ENCODE measurements at regions of chr7 and their contacts with region 1.

Region 1: DNA sequence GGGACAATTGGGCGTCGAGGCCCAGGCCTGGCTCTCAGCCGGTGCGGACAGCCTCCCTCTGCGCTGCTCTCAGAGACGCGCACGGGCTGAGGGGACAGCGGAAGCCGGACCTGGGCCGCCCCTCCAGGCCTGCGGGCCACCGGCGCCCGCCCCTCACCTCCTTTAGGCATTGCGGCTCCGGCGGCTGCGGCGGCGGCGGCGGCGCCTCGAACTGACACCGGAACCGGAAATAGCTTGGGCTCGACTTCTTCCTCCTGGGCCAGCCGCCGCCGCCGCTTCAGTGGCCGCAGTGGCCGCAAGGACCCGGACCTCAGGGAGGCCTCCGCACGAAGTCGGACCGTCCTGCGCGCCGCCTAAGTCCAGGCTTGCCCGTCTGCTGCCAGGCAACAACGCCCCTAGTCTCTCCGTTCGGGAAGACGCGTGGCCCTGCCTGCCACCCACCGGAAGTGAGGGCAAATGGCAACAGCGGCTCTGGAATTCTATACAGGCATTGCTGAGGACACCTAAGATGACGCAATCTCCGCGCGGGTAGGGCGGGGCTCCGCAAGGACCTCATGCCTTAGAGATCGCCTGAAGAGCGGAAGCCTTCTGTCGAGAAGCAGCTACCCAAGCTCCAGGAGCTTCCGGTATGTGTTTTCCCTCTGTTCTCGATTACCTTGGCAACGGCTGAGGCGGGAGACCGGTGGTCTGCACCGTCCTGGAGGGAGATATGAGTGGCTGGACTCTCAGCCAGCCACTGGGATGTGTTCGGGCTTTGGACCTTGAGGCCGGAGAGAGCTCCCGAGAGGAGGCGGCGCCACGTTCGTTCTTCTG is at the starts of genes BUD31 and PDAP1:
- DNase-seq: peak; percentile 95
- CTCF ChIP-seq: no peak

Region 2: GRCh38 chr7:98681951-98682350 is 726.6 kb before region 1 on chr7:
- CTCF ChIA-PET with region 1: no interaction called
- POLR2A ChIA-PET with region 1: no interaction called
- DNase-seq: no peak
- CTCF ChIP-seq: no peak

Region 3: DNA sequence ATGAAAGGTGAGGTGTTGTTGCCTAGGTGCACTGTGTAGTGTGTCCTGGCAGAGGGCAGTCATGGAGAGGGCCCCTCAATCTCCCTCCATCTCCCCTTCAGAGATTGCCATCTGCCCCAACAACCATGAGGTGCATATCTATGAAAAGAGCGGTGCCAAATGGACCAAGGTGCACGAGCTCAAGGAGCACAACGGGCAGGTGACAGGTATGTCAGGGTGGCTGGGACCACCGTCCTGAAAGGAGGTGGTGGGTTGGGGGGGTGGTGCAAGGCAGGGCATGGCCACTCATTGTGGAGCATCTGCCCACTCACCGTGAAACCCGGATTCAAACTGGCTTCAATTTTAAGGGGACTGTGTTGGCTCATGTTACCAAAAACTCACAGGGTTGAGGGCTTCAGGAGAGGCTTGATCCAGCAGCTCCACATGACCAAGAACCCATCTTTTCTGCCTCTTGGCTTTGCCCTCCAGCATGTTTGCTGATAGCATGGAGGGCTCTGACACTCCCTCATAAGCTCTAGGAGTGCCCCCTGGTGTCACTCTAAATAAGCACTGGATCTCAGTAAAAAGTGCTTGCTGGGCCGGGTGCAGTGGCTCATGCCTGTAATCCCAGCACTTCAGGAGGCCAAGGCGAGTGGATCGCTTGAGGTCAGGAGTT is 21.9 kb before region 1 on chr7:
- CTCF ChIA-PET with region 1: interaction called, 11 read pairs
- POLR2A ChIA-PET with region 1: no interaction called
- DNase-seq: no peak
- CTCF ChIP-seq: peak; percentile 55

Region 4: GRCh38 chr7:99422186-99422585 is 13.6 kb after region 1 on chr7:
- CTCF ChIA-PET with region 1: interaction called, 4 read pairs
- POLR2A ChIA-PET with region 1: interaction called, 15 read pairs
- DNase-seq: no peak
- CTCF ChIP-seq: no peak

Region 5: DNA sequence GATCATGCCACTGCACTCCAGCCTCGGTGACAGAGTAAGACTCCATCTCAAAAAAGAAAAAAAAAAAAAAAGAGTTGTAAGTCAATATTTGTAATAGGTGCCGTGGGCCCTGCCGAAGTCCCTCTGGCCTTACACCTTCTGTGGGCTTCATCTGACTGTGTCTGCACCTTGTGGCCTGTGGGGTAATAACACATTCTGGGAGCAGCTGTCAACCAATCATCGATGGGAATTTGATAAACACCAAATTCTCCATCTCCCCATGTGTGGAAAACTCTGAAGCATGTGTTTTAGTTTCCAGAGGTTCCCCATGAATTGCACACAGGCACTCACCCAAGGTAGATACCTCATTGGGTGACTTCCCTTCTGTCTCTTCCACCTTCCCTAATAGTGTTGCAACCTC is 80.7 kb after region 1 on chr7:
- CTCF ChIA-PET with region 1: no interaction called
- POLR2A ChIA-PET with region 1: no interaction called
- DNase-seq: no peak
- CTCF ChIP-seq: no peak

Region 6: DNA sequence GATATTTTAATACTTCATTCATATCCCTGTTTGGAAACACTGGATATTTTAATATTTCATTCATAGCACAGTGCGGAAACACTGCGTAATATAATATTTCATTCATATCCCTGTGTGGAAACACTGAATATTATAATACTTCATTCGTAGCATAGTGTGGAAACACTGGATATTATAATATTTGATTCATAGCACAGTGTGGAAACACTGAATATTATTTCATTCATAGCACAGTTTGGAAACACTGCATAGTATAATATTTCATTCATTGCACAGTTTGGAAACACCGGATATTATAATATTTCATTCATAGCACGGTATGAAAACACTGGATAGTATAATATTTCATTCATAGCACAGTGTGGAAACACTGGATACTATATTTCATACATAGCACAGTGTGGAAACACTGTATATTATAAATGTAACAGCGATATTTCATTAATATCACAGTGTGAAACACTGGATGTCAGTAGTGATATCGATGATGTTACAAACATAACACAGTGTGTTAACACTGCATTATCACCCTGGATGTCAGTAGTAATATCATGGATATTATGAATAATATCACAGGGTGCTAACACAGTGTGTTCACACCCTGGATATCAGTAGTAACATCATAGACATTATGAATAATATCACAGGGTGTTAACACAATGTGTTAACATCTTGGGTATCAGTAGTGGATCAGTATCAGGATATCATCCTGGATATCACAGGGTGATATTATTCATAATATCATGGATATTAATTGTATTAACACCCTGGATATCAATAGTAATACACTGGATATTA is 186.6 kb after region 1 on chr7:
- CTCF ChIA-PET with region 1: no interaction called
- POLR2A ChIA-PET with region 1: no interaction called
- DNase-seq: no peak
- CTCF ChIP-seq: no peak